H1 (cell line): ENCODE measurements at regions of chr20 and their contacts with region 1.

Region 1: GRCh38 chr20:17431621-17432364 is 99.4 kb downstream of the BFSP1 start:
- DNase-seq: peak; percentile 23 to 85
- H3K4me3 ChIP-seq: no peak overlapping the region
- H3K27ac ChIP-seq: no peak overlapping the region
- H3K4me1 ChIP-seq: peaks cover 0 to 5% (median under 1%) of the 10 kb centered on the region in 4 experiments; a peak in 2 of 7 replicates
- H3K27me3 ChIP-seq: no peaks in the 10 kb centered on the region; a peak in 1 of 7 replicates
- CTCF ChIP-seq: peak; percentile 75 to 84 (median 78)
- EP300 ChIP-seq: no peak
- POLR2A ChIP-seq: no peak
- RAD21 ChIP-seq: peak; percentile 88 to 92

Region 2: GRCh38 chr20:16810216-16810615 is 621.6 kb before region 1 on chr20:
- CTCF ChIA-PET with region 1: interaction called, 110 read pairs
- POLR2A ChIA-PET with region 1: no interaction called
- DNase-seq: no peak
- H3K4me3 ChIP-seq: no peak overlapping the region
- H3K27ac ChIP-seq: no peak overlapping the region
- H3K4me1 ChIP-seq: no peaks in the 10 kb centered on the region
- H3K27me3 ChIP-seq: no peaks in the 10 kb centered on the region
- CTCF ChIP-seq: no peak
- EP300 ChIP-seq: no peak
- POLR2A ChIP-seq: no peak
- RAD21 ChIP-seq: no peak

Region 3: DNA sequence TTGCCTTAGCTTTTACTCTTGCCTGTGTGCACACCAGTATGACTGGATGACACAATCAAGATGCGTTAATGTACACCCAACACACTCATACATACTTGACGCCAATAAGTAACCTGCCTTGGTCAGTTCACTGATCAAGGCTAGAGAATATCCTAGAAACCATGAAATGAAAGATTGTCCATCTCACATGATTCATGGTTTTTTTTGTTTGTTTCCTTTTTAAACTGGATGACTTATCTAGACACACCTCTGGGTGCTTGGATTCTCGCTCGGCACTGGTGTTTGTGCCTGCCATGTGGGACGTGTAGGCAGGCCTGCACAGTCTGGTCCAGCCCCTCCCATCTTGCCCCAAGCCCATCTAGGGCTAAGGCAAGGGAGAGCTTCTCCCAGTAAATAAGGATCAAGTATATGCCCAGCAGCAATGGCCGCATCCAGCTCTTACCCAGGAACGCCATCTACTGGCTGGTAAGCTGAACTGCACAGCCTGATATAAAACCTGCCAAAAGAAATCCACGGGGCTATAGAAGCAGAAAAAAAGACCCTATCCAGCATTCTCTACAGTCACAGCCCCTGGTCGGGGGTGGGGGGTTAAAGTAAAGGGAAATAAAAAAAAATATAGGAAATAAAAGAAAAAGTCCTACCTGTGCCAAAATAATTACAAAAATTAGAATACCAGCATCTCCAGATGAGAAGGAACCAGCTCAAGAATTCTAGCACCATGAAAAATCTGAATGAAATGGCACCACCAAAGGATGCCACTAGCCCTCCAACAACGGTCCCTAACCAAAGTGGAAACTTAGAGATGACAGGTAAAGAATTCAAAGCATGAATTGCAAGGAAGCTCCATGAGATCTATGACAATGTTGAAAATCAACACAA is 610.3 kb before region 1 on chr20:
- CTCF ChIA-PET with region 1: interaction called, 26 read pairs
- POLR2A ChIA-PET with region 1: no interaction called
- DNase-seq: peak; percentile 13 to 52
- H3K4me3 ChIP-seq: no peak overlapping the region
- H3K27ac ChIP-seq: no peak overlapping the region
- H3K4me1 ChIP-seq: no peaks in the 10 kb centered on the region
- H3K27me3 ChIP-seq: no peaks in the 10 kb centered on the region
- CTCF ChIP-seq: peak; percentile 65 to 83 (median 82)
- EP300 ChIP-seq: peak in 1 of 2 experiments; percentile 18; a peak in 1 of 3 replicates
- POLR2A ChIP-seq: no peak
- RAD21 ChIP-seq: peak; percentile 82 to 89

Region 4: DNA sequence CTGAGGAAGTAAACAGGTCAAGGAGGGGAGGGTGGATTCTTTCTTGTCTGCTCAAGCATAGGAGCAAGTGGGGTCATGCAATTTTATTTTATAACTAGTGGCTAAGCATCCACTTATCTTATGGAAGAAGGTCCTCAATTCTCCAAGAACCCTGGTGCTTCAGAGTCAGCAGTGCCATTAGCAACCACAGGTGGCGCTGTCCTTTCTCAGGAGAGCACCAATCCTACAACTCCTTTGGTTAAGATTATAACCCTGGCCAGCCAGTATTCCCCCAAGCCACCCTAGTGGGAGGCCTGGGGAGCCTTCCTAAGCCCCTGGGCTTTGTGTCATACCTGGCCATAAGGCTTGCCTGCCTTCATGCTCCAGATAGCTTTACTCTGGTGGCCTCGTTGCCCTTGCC is 144.3 kb before region 1 on chr20:
- CTCF ChIA-PET with region 1: interaction called, 14 read pairs
- POLR2A ChIA-PET with region 1: no interaction called
- DNase-seq: peak in 1 of 2 experiments; percentile 66
- H3K4me3 ChIP-seq: no peak overlapping the region
- H3K27ac ChIP-seq: no peak overlapping the region
- H3K4me1 ChIP-seq: peaks cover 2 to 5% (median 4%) of the 10 kb centered on the region in 4 experiments; a peak in 4 of 7 replicates
- H3K27me3 ChIP-seq: peaks cover 0 to 1% (median 0%) of the 10 kb centered on the region in 4 experiments; a peak in 2 of 7 replicates
- CTCF ChIP-seq: peak; percentile 43 to 70 (median 62)
- EP300 ChIP-seq: no peak
- POLR2A ChIP-seq: no peak
- RAD21 ChIP-seq: peak; percentile 14 to 27; a peak in 2 of 4 replicates

Region 5: DNA sequence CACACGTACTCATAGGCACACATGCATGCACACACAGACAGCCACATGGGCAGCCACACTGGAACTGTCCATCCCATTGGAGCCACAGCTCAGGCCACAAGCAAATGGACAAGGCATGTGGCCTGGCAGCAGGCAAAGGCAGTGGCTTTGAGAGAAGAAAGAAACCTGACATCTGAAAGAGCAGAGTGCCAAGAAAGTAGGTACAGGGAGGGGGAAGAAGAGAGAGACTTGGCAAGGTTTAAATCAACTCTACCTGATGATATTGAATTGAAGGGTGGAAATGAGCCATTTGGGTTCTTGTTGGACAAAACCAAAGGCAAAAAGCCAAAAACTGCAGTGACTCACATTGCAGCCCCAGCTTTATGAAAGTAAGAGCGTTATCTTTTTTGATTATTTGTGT is 62.3 kb before region 1 on chr20:
- CTCF ChIA-PET with region 1: interaction called, 11 read pairs
- POLR2A ChIA-PET with region 1: no interaction called
- DNase-seq: no peak
- H3K4me3 ChIP-seq: no peak overlapping the region
- H3K27ac ChIP-seq: no peak overlapping the region
- H3K4me1 ChIP-seq: no peaks in the 10 kb centered on the region
- H3K27me3 ChIP-seq: no peaks in the 10 kb centered on the region
- CTCF ChIP-seq: no peak
- EP300 ChIP-seq: no peak
- POLR2A ChIP-seq: no peak
- RAD21 ChIP-seq: no peak

Region 6: GRCh38 chr20:17395729-17396128 is 36.1 kb before region 1 on chr20:
- CTCF ChIA-PET with region 1: no interaction called
- POLR2A ChIA-PET with region 1: no interaction called
- DNase-seq: no peak
- H3K4me3 ChIP-seq: no peak overlapping the region
- H3K27ac ChIP-seq: no peak overlapping the region
- H3K4me1 ChIP-seq: no peaks in the 10 kb centered on the region
- H3K27me3 ChIP-seq: no peaks in the 10 kb centered on the region
- CTCF ChIP-seq: no peak
- EP300 ChIP-seq: no peak
- POLR2A ChIP-seq: no peak
- RAD21 ChIP-seq: no peak

Region 7: DNA sequence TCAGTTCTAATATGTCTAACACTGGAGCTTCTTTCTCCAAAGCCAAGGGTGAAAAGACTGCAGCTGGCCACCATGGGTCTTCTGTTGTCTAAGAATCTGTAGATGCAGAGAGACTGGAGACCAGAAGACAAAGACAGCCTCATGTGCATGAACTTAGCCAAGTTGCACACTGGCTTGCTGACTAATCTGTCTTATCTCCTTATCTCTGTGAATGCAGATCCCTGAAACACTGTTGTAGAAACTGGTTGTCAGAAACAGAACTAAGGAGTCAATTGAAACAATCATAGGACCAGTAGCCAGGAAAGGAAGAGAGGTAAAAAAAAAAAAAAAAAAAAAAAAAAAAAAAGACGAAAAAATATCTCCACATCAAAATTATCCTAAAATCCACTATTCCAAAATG is 10.3 kb before region 1 on chr20:
- CTCF ChIA-PET with region 1: interaction called, 19 read pairs
- POLR2A ChIA-PET with region 1: no interaction called
- DNase-seq: no peak
- H3K4me3 ChIP-seq: no peak overlapping the region
- H3K27ac ChIP-seq: no peak overlapping the region
- H3K4me1 ChIP-seq: peaks cover 0 to 4% (median 2%) of the 10 kb centered on the region in 4 experiments; a peak in 1 of 7 replicates
- H3K27me3 ChIP-seq: no peaks in the 10 kb centered on the region
- CTCF ChIP-seq: no peak
- EP300 ChIP-seq: no peak
- POLR2A ChIP-seq: no peak
- RAD21 ChIP-seq: no peak

Region 8: DNA sequence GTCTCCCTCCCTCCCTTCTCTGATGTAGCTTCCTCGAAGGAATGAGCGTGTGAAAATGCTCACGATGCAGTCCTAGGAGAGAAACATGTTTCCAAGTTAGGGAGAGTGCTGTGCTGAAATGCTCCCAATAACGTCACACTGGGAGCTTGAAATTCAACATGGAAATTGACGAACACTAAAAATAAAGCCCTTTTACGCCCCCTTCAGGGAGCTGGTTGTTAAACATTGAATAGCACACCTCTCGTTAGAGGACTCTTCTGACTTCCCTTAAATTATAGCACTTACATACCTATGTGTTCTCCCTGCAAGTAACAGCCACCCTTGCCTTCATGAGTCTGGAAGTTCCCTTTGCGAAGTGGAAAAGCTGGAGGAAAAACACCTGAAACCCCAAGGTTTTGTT is 10.8 kb after region 1 on chr20:
- CTCF ChIA-PET with region 1: interaction called, 18 read pairs
- POLR2A ChIA-PET with region 1: no interaction called
- DNase-seq: no peak
- H3K4me3 ChIP-seq: no peak overlapping the region
- H3K27ac ChIP-seq: no peak overlapping the region
- H3K4me1 ChIP-seq: no peaks in the 10 kb centered on the region
- H3K27me3 ChIP-seq: peaks cover 0 to 2% (median 0%) of the 10 kb centered on the region in 4 experiments; a peak in 2 of 7 replicates
- CTCF ChIP-seq: peak in 2 of 3 experiments; percentile 55 to 71; a peak in 3 of 4 replicates
- EP300 ChIP-seq: no peak
- POLR2A ChIP-seq: no peak
- RAD21 ChIP-seq: peak; percentile 76 to 78